Activated CD4-positive, alpha-beta T cell treated with anti-CD3 and anti-CD28 coated beads, Interleukin-2, amount 10 ng/mL, durations not matched to agents 24 days and 14 days (primary cell): ENCODE measurements at regions of chr20 and their contacts with region 1.

Region 1: DNA sequence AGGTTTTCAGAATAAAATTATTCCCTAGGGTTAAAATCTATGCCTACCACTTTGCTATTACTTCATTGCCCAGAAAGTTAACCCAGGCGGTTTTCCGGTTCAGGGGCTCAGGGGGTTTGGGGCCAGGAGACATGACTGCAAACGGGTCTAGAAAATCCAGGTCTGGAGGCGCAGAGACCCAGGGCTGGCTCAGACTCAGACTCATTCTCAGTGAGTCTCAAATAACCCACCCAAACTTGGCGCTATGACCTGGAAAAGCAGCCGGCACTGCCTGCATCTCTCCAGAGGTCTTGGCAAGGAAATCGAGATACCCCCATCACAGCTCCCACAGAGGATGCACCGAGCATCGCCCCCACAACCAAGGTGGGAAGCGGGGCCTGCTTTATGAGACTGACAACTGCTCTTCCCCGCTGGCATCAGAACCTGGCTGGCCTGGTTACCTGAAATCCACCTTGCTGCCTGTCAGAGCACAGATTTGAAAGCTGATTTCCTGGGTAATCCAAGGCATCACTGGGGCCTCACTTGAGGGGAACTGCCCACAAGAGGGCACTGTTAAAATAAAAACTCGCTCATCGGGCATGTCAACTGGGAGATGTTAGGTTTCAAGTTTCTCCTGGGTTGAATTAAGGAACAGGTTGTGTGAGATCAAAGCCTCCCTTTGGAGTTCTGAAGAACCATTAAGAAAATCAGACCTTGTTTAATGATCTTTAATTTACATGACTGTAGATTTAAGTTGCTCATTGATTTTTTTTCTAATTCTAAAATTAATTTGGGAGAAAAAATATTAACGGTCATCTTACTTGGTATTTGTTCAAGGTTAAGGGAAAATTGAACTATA is 55.1 kb downstream of the KIF16B start:
- DNase-seq: peak; percentile 69
- H3K4me3 Mint-ChIP-seq: no peak overlapping the region
- H3K27ac Mint-ChIP-seq: no peak overlapping the region
- H3K4me1 Mint-ChIP-seq: no peaks in the 10 kb centered on the region
- H3K27me3 Mint-ChIP-seq: no peaks in the 10 kb centered on the region

Region 2: GRCh38 chr20:16530201-16530681 is 12.1 kb after region 1 on chr20:
- intact Hi-C with region 1: no loop called
- DNase-seq: no peak
- H3K4me3 Mint-ChIP-seq: no peak overlapping the region
- H3K27ac Mint-ChIP-seq: no peak overlapping the region
- H3K4me1 Mint-ChIP-seq: no peaks in the 10 kb centered on the region
- H3K27me3 Mint-ChIP-seq: no peaks in the 10 kb centered on the region

Region 3: GRCh38 chr20:16761305-16761829 is 243.2 kb after region 1 on chr20:
- intact Hi-C with region 1: loop called (anchors 1 kb)
- DNase-seq: peak; percentile 84
- H3K4me3 Mint-ChIP-seq: no peak overlapping the region
- H3K27ac Mint-ChIP-seq: no peak overlapping the region
- H3K4me1 Mint-ChIP-seq: no peaks in the 10 kb centered on the region
- H3K27me3 Mint-ChIP-seq: peaks cover 15% of the 10 kb centered on the region

Region 4: GRCh38 chr20:16821211-16822089 is 303.3 kb after region 1 on chr20:
- intact Hi-C with region 1: loop called (anchors 5 kb)
- DNase-seq: peak; percentile 77
- H3K4me3 Mint-ChIP-seq: no peak overlapping the region
- H3K27ac Mint-ChIP-seq: no peak overlapping the region
- H3K4me1 Mint-ChIP-seq: no peaks in the 10 kb centered on the region
- H3K27me3 Mint-ChIP-seq: peaks cover 5% of the 10 kb centered on the region